Activated CD4-positive, alpha-beta T cell treated with anti-CD3 and anti-CD28 coated beads for 36 hours (primary cell): ENCODE measurements at regions of chr1 and their contacts with region 1.

Region 1: DNA sequence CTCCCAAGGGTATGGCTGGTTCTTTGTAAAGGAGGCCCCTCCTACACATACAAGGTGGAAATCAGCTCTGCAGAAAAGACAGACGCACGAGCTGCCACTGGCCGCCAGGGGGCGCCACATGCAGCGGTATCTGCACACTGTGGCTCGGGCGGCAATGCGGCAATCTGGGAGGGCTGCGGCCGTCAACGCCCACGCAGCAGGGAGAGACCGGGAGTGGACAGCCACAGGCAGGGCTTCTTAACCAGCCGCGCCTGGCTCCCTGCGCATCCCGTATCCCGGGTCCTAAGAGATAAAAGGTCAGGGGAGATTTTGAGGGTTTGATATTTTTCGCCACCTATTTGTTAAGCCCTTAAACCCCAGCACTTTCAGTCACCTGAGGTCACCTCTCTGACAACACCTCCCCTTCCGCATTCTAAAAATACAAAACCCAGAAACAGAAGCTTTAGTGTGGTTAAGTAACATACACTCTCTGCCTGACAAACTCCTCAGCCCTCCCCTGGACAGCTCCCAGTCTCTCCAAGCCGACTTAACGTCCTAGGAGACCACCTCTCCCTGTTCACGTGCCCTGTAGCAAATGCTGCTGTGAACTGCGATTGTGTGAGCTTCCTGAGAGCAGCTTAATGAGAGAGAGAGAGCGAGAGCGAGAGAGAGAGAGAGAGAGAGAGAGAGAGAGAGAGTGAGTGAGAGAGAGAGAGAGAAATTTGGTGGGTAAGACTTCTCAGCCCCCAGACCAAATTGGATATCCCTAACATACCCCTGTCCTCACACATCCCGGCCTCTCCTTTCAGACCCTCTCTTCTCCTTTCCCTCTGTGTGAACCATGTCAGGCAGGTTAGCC is 13.5 kb upstream of the KCNA2 start:
- DNase-seq: peak; percentile 94
- ATAC-seq: peak; percentile 89
- H3K4me3 Mint-ChIP-seq: peak overlapping the region; percentile 72
- H3K27ac Mint-ChIP-seq: peak overlapping the region; percentile 60
- H3K4me1 Mint-ChIP-seq: peaks cover 26% of the 10 kb centered on the region
- H3K27me3 Mint-ChIP-seq: no peaks in the 10 kb centered on the region

Region 2: GRCh38 chr1:110477041-110477440 is 142.6 kb before region 1 on chr1:
- CTCF ChIA-PET with region 1: no interaction called
- POLR2A ChIA-PET with region 1: no interaction called
- intact Hi-C with region 1: no loop called
- DNase-seq: no peak
- ATAC-seq: peak; percentile 96
- H3K4me3 Mint-ChIP-seq: no peak overlapping the region
- H3K27ac Mint-ChIP-seq: no peak overlapping the region
- H3K4me1 Mint-ChIP-seq: peaks cover 12% of the 10 kb centered on the region
- H3K27me3 Mint-ChIP-seq: peaks cover 5% of the 10 kb centered on the region

Region 3: DNA sequence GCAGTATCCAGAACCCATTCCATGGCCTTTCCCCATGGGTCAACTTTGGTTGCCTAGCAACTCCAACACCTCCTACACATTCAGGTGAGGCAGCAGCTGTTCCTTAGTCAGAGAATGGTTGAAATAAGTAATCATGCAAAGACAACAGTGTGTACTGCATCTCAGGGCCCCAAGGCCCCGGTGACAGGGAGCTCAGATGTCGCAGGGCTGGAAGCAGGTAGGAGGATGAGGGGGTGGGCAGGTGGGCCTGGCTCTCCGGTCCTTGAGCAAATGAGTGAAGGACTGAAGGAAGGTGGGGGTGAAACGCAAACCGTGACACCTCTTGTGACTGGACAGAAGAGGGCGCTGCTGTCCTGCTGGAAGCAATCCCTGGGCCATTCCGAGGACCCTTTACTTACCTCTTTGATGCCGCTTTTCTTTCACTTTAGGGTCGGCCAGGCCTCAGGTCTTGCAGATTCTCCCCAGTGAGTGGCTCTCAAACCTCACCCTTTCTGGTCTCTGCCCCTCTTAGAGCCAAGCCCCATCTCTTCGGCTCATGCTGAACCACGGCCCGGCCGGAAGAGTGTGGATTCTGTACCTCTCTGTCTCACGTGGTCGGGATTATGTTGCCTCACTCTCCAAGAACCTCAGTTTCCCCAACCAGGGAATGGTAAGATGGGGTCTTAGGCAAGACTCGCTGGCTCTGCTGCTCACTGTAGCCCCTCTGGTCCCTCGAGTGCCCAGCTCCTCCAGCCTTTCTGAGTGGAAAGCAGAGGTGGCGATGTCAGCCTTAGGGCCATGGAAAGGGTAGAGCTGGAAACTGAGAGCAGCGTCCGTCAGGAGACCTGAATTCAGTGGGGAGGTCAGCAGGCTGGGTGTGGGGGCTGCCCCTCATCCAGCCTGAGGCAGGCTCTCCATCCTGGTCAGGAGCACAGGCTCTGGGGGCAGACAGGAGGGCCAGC is 95.0 kb before region 1 on chr1:
- CTCF ChIA-PET with region 1: interaction called, 9 read pairs
- POLR2A ChIA-PET with region 1: no interaction called
- intact Hi-C with region 1: loop called (anchors 1 kb)
- DNase-seq: peak; percentile 75
- ATAC-seq: peak; percentile 88
- H3K4me3 Mint-ChIP-seq: no peak overlapping the region
- H3K27ac Mint-ChIP-seq: no peak overlapping the region
- H3K4me1 Mint-ChIP-seq: peaks cover 2% of the 10 kb centered on the region
- H3K27me3 Mint-ChIP-seq: peaks cover 25% of the 10 kb centered on the region

Region 4: DNA sequence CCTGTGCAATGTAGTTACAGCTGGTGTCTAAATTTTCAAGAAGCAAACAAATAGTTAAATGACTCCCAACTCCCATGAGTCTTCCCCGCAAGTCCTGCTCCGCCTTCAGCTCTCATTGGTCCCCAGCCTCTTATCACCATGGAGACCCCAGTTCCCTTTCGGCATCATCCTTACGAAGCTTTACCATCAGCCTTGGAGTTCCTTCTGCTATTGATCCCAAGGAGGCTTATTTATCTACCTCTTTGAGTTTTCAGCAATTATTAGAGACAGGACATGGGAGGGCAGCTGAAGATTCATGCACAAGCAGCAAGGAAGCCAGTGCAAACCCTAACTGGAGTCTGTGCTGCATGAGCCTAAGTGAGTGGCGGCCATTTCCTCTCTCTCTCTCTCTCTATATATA is 25.7 kb before region 1 on chr1:
- CTCF ChIA-PET with region 1: no interaction called
- POLR2A ChIA-PET with region 1: no interaction called
- intact Hi-C with region 1: no loop called
- DNase-seq: no peak
- ATAC-seq: no peak
- H3K4me3 Mint-ChIP-seq: no peak overlapping the region
- H3K27ac Mint-ChIP-seq: no peak overlapping the region
- H3K4me1 Mint-ChIP-seq: peaks cover 4% of the 10 kb centered on the region
- H3K27me3 Mint-ChIP-seq: peaks cover 3% of the 10 kb centered on the region

Region 5: DNA sequence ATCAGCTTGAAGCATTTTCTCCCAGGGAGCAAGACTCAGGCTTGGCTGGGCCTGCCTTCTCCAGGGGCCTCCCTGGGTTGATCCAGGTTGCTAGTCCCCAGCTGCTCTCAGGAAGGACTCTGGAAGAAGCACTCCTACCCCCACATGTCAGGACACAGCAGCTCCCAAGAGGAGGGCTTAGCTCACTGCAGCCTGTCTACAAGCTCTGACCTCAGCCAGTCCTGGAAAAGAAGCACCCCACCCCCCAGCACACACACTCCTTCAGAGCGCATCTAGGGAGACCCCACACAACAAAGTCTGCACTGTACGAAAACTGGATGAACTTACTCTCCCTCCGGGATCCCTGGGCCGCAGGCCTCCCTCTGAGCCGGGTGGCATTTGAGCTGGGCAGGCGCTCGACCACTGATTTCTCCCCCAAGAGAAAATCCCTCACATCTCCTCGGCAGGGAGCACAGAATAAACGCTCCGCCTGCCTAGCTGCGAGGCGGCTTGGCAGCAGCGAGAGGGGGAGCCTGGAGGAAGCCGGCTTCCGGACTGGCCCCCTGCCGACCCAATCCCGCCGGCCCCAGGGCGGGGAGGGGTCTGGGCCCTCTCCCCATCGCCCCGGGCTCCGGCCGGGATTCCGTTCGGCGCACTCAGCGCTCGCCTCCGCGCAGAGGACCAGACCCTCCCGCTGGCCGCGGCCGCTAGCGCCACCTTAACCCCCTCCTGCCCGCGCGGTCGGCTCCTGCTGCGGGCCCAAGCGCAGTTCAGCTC is 13.6 kb before region 1 on chr1 and contains the start of gene KCNA2:
- CTCF ChIA-PET with region 1: interaction called, 25 read pairs
- POLR2A ChIA-PET with region 1: no interaction called
- intact Hi-C with region 1: no loop called
- DNase-seq: peak; percentile 24
- ATAC-seq: peak; percentile 7
- H3K4me3 Mint-ChIP-seq: peak within 1 kb of the TSS; percentile 68
- H3K27ac Mint-ChIP-seq: no peak within 1 kb of the TSS
- H3K4me1 Mint-ChIP-seq: peaks cover 8% of the 10 kb centered on the region
- H3K27me3 Mint-ChIP-seq: peaks cover 48% of the 10 kb centered on the region
- total RNA-seq, gene KCNA2: 0.25 to 0.37 TPM

Region 6: DNA sequence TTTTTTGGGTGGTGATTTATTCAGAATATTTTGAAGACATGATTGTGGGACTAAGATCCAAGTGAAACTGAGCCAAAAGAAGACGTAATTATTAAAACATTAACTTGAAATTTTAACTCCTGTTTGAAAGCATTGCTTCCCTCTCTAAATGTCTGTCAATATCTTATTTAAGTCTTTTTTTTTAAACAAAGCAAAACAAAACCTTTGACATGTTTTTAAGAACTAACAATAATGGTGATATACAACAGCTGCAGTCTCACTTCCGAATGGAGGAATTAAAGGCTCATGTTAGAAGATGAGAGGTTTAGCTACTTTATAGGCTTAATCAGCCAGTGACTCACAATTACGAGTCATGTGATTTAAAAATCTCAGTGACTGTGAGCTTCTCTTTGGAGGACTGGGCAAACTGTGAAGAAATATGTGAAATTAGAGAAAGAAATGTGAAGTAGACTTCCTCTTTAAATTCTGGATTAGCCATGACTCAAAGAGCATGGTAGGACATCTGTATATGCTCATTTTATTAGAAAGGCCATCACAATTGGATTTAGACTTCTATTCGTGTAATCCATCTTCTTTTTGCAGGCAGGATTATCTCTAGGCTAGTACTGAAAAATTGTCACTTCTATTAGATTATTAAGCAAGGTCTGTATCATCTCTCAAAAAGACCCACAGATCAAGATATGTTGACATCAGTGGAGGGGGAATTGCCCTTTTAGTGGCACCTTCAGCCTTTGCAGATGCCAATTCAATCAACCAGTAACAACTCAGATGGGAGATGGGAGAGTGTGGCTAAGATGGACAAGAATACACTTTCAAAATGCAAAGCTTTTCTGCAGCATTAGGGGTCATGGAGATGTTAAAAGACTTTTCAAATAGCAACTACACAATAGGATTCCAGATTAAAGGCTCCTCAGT is 26.4 kb after region 1 on chr1:
- CTCF ChIA-PET with region 1: interaction called, 18 read pairs
- POLR2A ChIA-PET with region 1: no interaction called
- intact Hi-C with region 1: no loop called
- DNase-seq: no peak
- ATAC-seq: peak; percentile 52
- H3K4me3 Mint-ChIP-seq: peak overlapping the region; percentile 25
- H3K27ac Mint-ChIP-seq: no peak overlapping the region
- H3K4me1 Mint-ChIP-seq: peaks cover 41% of the 10 kb centered on the region
- H3K27me3 Mint-ChIP-seq: no peaks in the 10 kb centered on the region

Region 7: DNA sequence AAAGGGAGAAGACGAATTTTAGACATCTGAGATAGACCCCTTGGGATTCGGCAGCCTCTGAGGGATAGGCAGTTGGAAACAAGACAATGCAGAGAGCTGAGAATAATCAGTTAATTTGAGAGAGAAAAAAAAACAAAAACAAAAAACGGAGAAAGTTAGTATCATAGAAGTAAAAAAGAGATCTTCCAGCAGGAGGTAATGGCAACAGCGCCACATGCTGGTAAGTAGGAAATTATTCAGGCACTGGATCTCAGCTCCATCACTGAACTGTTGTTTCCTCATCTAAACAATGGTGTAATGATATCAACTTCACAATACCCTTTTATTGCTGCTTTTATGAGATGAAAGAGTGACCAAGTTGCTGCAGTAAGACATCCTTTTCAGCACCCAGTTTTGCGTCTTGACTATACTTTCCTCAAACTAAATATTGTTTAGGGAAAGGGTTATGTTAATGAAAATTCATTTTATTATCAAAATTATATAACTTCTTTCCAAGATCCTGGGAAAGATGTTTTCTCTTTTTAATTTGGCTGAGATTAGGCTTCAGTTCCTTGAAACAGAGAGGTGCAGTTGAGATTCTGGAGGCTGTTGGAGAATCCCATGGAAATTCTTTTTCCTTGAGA is 146.5 kb after region 1 on chr1:
- CTCF ChIA-PET with region 1: interaction called, 119 read pairs
- POLR2A ChIA-PET with region 1: interaction called, 7 read pairs
- intact Hi-C with region 1: loop called (anchors 1 kb)
- DNase-seq: peak; percentile 72
- ATAC-seq: peak; percentile 70
- H3K4me3 Mint-ChIP-seq: peak overlapping the region; percentile 5
- H3K27ac Mint-ChIP-seq: no peak overlapping the region
- H3K4me1 Mint-ChIP-seq: peaks cover 5% of the 10 kb centered on the region
- H3K27me3 Mint-ChIP-seq: peaks cover 6% of the 10 kb centered on the region

Region 8: GRCh38 chr1:110850636-110851035 is 231.0 kb after region 1 on chr1:
- CTCF ChIA-PET with region 1: no interaction called
- POLR2A ChIA-PET with region 1: no interaction called
- intact Hi-C with region 1: no loop called
- DNase-seq: no peak
- ATAC-seq: no peak
- H3K4me3 Mint-ChIP-seq: no peak overlapping the region
- H3K27ac Mint-ChIP-seq: no peak overlapping the region
- H3K4me1 Mint-ChIP-seq: peaks cover 5% of the 10 kb centered on the region
- H3K27me3 Mint-ChIP-seq: no peaks in the 10 kb centered on the region

Region 9: GRCh38 chr1:110916669-110917306 is 297.2 kb after region 1 on chr1:
- CTCF ChIA-PET with region 1: no interaction called
- POLR2A ChIA-PET with region 1: no interaction called
- intact Hi-C with region 1: no loop called
- DNase-seq: peak; percentile 56
- ATAC-seq: peak; percentile 87
- H3K4me3 Mint-ChIP-seq: no peak overlapping the region
- H3K27ac Mint-ChIP-seq: peak overlapping the region; percentile 33
- H3K4me1 Mint-ChIP-seq: peaks cover 11% of the 10 kb centered on the region
- H3K27me3 Mint-ChIP-seq: no peaks in the 10 kb centered on the region

Region 10: DNA sequence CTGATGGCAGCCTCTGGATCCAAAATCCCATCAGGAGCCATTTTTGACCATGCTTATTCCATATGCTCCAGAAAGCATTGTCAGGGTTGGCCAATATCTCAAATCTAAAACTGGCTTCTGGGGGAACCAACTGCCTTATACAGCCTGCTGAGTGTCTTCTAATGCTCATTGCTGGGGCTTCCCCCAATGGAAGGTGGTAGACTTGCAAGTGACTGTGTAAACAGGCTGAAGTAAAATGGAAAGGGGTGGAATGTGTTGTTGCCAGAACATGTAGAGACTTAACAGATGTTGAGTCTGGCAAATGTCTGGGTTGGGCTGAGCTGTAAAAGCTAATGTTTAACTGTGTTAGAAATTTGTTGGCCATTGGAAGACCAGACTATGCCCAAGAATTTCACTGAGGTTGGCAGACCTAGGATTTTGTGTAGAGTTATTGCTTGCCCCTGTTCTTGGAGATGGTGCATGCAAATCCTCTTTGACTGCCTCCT is 366.8 kb after region 1 on chr1:
- CTCF ChIA-PET with region 1: no interaction called
- POLR2A ChIA-PET with region 1: no interaction called
- intact Hi-C with region 1: loop called (anchors 5 kb)
- DNase-seq: no peak
- ATAC-seq: peak; percentile 61
- H3K4me3 Mint-ChIP-seq: no peak overlapping the region
- H3K27ac Mint-ChIP-seq: no peak overlapping the region
- H3K4me1 Mint-ChIP-seq: peaks cover 9% of the 10 kb centered on the region
- H3K27me3 Mint-ChIP-seq: peaks cover 2% of the 10 kb centered on the region